Transverse colon (tissue), 4 donors: ENCODE measurements at regions of chr3 and their contacts with region 1.

Region 1: DNA sequence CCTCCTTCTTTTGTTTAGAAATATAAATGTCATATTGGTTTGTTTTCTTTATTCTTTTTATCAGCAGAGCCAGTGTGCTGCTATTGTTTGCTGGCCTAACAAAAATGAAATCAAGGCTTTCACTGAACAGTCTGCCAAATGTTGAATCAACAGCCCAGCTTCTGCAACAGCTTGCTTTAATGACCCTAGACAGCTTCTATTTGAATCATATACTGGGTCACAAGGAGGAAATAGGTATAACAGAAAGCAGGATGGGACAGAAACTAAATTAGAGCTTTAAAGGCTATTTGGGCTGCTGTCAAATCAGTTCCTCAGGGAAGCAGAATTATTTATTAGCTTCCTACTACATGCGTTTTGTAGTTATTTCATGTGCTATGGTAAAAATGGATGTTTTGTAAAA is 12.1 kb upstream of the DNAJC13 start:
- DNase-seq: no peak
- H3K4me3 ChIP-seq: no peak overlapping the region
- H3K27ac ChIP-seq: no peak overlapping the region
- H3K4me1 ChIP-seq: peaks cover 0 to 7% (median 1%) of the 10 kb centered on the region in 4 donors
- H3K27me3 ChIP-seq: no peaks in the 10 kb centered on the region
- CTCF ChIP-seq: no peak
- EP300 ChIP-seq: no peak
- POLR2A ChIP-seq: no peak

Region 2: DNA sequence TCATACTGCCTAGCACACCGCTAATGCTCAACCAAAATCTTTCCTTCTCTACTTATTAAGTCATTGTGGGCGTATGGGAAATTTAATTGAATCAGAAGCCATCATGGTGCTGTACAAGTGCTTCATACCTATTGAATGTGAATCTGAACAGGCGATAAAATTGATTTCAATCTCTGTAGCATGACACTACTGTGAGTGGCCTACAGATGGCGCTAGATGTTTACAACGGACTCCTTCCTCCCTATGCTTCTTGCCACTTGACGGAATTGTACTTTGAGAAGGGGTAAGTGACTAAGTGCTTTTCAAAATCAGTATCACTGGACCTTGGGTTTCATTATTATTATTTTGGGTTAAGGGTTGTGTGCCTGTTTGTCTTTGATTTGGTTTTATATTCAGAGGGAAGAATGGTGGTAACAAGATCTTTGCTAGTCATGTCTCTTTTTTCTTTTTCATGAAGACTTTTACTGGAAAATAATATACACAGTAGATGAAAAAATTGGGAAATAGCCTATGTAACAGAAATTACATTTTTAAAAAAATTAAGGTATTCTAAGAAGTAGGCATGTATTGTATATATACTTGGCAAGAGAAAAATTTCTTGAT is 52.5 kb before region 1 on chr3:
- in situ Hi-C with region 1: loop called in 3 of 4 experiments (anchors 5 to 10 kb)
- intact Hi-C with region 1: no loop called
- DNase-seq: peak; percentile 70
- H3K4me3 ChIP-seq: no peak overlapping the region
- H3K27ac ChIP-seq: no peak overlapping the region
- H3K4me1 ChIP-seq: no peaks in the 10 kb centered on the region
- H3K27me3 ChIP-seq: no peaks in the 10 kb centered on the region
- CTCF ChIP-seq: peak; percentile 83 to 93 (median 87)
- EP300 ChIP-seq: no peak
- POLR2A ChIP-seq: no peak

Region 3: DNA sequence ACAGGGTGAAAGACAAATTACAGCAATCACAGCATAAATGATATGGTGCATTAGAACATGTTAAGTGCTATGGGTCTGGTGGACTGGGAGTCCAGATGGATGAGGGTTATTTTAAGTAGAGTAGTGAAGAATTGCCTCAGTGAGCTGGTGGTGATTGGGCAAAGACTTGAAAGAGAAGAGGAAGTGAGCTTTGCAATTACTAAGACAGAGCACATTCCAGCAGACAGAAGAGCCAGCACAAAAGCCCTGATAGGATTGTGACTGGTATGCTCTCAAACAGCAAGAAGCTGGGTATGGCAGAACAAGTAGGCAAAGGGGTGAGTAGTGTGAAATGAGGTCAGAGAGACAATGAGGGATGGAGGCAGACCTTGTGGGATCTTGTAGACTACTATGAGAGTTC is 189.8 kb after region 1 on chr3:
- in situ Hi-C with region 1: no loop called
- intact Hi-C with region 1: no loop called
- DNase-seq: no peak
- H3K4me3 ChIP-seq: no peak overlapping the region
- H3K27ac ChIP-seq: no peak overlapping the region
- H3K4me1 ChIP-seq: peaks cover 0 to 13% (median 4%) of the 10 kb centered on the region in 4 donors
- H3K27me3 ChIP-seq: no peaks in the 10 kb centered on the region
- CTCF ChIP-seq: no peak
- EP300 ChIP-seq: no peak
- POLR2A ChIP-seq: no peak